A673 (cell line): ENCODE measurements at regions of chr19 and their contacts with region 1.

Region 1: DNA sequence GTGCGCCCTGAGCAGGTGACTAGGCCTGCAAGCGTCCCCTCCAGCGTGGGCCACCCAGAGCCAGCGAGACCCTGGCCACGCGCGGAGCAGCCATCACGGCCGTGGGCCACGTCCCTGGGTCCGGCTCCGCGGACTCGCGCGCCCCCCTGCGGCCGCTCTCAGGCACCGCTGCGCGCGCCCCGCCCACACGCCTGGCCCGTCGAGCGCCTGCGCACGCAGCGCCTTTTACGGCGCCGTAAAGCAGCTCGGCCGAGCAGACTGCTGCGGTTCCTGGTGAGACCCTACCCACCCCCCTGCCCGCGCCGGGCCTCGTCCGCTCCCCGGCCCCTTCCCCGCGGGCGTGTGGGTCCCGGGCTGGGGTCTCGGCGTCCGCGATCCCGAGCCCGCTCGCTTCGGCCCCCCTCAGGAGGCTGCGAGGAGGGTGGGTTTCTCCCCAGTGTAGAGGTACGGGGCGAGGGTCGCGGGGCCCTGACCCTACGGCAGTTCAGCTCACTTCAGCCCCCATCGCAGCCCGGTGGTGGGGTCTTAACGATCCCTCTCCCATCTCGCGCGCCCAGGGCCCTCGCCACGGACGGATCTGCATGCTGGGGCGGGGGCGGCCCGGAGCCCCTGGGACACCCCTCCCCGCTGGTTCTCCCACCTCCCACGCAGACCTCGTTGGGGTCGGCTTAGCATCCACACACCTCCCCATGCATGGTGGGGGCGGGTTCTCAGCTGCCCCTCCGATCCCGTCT is at the start of gene TRAPPC5:
- DNase-seq: peak; percentile 89
- H3K4me3 ChIP-seq: peak within 1 kb of the TSS; percentile 97
- H3K27ac ChIP-seq: peak within 1 kb of the TSS; percentile 76
- H3K4me1 ChIP-seq: peaks cover 15% of the 10 kb centered on the region
- H3K27me3 ChIP-seq: no peaks in the 10 kb centered on the region
- CTCF ChIP-seq: peak; percentile 67
- total RNA-seq, gene TRAPPC5: 105 and 107 TPM in 2 replicates

Region 2: GRCh38 chr19:7366701-7367420 is 313.9 kb before region 1 on chr19:
- CTCF ChIA-PET with region 1: no interaction called
- POLR2A ChIA-PET with region 1: no interaction called
- intact Hi-C with region 1: loop called (anchors 5 kb)
- DNase-seq: peak; percentile 60
- H3K4me3 ChIP-seq: no peak overlapping the region
- H3K27ac ChIP-seq: no peak overlapping the region
- H3K4me1 ChIP-seq: no peaks in the 10 kb centered on the region
- H3K27me3 ChIP-seq: peaks cover 14% of the 10 kb centered on the region
- CTCF ChIP-seq: peak; percentile 56

Region 3: GRCh38 chr19:7562646-7563393 is 118.0 kb before region 1 on chr19:
- CTCF ChIA-PET with region 1: interaction called, 37 read pairs
- POLR2A ChIA-PET with region 1: no interaction called
- intact Hi-C with region 1: loop called (anchors 1 kb)
- DNase-seq: no peak
- H3K4me3 ChIP-seq: no peak overlapping the region
- H3K27ac ChIP-seq: no peak overlapping the region
- H3K4me1 ChIP-seq: no peaks in the 10 kb centered on the region
- H3K27me3 ChIP-seq: no peaks in the 10 kb centered on the region
- CTCF ChIP-seq: no peak

Region 4: GRCh38 chr19:7652061-7652641 is 28.6 kb before region 1 on chr19:
- CTCF ChIA-PET with region 1: interaction called, 15 read pairs
- POLR2A ChIA-PET with region 1: no interaction called
- intact Hi-C with region 1: loop called (anchors 2 kb)
- DNase-seq: peak; percentile 76
- H3K4me3 ChIP-seq: peak overlapping the region; percentile 20
- H3K27ac ChIP-seq: no peak overlapping the region
- H3K4me1 ChIP-seq: no peaks in the 10 kb centered on the region
- H3K27me3 ChIP-seq: no peaks in the 10 kb centered on the region
- CTCF ChIP-seq: peak; percentile 97

Region 5: GRCh38 chr19:7698583-7698982 is 17.8 kb after region 1 on chr19:
- CTCF ChIA-PET with region 1: interaction called, 10 read pairs
- POLR2A ChIA-PET with region 1: no interaction called
- intact Hi-C with region 1: no loop called
- DNase-seq: no peak
- H3K4me3 ChIP-seq: no peak overlapping the region
- H3K27ac ChIP-seq: no peak overlapping the region
- H3K4me1 ChIP-seq: no peaks in the 10 kb centered on the region
- H3K27me3 ChIP-seq: peaks cover 9% of the 10 kb centered on the region
- CTCF ChIP-seq: no peak

Region 6: DNA sequence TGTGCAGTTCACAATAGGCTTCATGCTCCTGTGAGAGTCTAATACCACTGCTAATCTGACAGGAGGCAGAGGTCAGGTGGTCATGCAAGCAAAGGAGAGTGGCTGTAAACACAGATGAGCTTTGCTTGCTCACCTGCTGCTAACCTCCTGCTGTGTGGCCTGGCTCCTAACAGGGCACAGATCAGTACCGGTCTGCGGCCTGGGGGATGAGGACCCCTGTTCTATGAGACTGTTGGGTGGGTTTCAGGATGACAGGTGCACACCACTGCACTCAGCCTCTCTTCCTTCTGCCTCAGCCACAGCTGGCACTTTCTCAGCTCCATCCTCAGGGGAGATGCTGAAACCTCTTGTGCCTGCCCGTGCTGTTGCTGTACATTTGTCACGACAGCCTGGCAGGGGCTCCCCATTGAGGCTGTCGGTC is 41.5 kb after region 1 on chr19:
- CTCF ChIA-PET with region 1: no interaction called
- POLR2A ChIA-PET with region 1: no interaction called
- intact Hi-C with region 1: no loop called
- DNase-seq: no peak
- H3K4me3 ChIP-seq: no peak overlapping the region
- H3K27ac ChIP-seq: no peak overlapping the region
- H3K4me1 ChIP-seq: no peaks in the 10 kb centered on the region
- H3K27me3 ChIP-seq: peaks cover under 1% of the 10 kb centered on the region
- CTCF ChIP-seq: no peak

Region 7: DNA sequence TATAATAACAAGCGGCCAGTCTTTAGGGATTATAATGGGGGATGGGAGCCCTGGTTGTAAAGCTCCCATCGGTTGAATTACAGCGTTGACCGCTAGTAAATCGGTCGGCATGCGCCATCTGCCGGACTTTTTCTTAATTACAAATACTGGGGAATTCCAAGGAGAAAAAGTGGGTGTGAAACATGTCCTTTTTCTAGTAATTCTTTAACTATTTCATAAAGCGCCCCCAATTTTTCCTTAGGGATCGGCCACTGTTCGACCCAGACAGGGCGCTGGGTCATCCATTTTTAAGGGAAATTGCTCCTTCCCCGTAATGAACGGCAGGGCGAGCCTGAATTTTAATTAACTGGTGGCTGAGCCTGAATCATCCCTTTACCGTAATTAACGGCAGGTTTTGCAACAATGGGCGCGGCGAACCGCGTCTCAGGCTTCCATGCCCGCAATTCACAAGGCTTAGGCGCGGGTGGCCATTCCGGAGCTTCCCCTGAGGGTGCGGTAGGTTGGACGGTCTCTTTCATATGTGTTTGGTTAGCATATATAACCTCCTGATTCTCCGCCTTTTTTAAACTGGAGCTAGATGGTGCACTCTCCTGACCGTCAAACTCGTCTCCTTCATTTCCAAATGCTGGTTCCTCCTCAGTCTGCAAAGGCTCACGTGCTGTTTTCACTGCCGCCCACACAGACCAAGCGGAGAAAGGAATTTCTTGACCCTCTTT is 119.0 kb after region 1 on chr19:
- CTCF ChIA-PET with region 1: interaction called, 11 read pairs
- POLR2A ChIA-PET with region 1: no interaction called
- intact Hi-C with region 1: loop called (anchors 2 kb)
- DNase-seq: peak; percentile 81
- H3K4me3 ChIP-seq: peak overlapping the region; percentile 27
- H3K27ac ChIP-seq: no peak overlapping the region
- H3K4me1 ChIP-seq: no peaks in the 10 kb centered on the region
- H3K27me3 ChIP-seq: peaks cover 25% of the 10 kb centered on the region
- CTCF ChIP-seq: peak; percentile 78